ENCODE measurements at regions of chr12 and their contacts with region 1.

Region 1: DNA sequence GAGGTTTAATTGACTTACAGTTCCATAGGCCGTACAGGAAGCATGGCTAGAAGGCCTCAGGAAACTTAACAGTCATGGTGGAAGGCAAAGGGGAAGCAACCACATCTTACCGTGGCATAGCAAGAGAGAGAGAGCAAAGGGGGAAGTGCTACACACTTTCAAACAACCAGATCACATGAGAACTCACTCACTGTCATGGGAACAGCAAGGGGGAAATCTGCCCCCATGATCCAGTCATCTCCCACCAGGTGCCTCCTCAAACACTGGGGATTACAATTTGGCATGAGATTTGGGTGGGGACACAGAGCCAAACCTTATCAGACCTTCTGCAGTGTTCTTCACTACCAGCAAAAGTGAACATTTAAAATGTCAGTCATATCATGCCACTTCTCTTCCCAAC is 58.9 kb downstream of the USP15 start:
- DNase-seq: no peak
- ATAC-seq: no peak

Region 2: DNA sequence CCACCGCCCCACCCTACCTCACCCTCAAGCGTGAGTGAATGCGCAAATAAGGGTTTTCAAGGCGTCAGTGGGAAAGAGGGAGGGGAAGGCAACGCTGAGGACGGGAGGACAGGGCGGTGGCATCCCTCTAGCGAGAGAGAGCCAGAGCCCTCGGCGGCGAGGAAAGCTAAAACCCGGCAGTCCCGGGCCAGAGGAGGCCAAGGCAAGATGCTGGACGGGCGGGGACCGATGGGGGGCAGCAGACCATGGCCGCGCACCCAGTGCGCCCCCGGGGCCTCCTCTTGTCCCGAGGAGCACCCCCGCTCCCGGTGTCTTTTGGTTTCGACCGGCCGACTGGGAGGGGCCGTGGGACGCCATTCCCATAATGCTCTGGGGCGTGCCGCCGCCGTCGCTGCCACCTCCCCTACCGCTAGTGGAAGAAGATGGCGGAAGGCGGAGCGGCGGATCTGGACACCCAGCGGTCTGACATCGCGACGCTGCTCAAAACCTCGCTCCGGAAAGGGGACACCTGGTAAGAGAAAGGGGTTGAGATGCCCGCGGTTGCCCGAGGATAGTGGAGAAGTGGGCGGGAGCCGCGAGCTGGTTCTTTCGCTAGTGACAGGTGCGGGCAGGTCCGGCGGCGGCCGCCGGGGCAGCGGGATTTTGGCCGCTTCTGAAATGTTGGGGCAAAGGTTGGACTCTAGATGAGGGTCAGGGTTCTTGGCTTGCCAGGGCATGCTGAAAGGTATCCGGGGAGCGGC is 58.9 kb before region 1 on chr12 and contains the start of gene USP15:
- intact Hi-C with region 1: loop called (anchors 5 kb)
- DNase-seq: peak; percentile 98
- ATAC-seq: peak; percentile 98
- total RNA-seq, gene USP15: 50.7 TPM

Region 3: GRCh38 chr12:62282057-62282774 is 36.8 kb before region 1 on chr12:
- intact Hi-C with region 1: loop called (anchors 5 kb)
- DNase-seq: peak; percentile 0
- ATAC-seq: no peak

Region 4: DNA sequence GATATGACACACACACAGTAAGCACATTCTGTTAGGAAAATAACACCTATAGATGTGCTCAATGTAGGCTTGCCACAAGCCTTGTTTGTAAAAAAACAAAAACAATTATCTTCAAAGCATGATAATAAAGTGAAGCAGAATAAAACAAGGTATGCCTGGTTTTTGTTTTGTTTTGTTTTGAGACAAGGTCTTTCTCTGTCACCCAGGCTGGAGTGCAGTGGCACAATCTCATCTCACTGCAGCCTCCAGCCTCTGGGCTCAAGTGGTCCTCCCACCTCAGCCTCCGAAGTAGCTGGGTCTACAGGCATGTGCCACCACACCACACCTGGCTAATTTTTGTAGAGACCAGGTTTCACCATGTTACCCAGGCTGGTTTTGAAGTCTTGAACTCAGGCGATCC is 95.1 kb after region 1 on chr12:
- intact Hi-C with region 1: no loop called
- DNase-seq: peak; percentile 37
- ATAC-seq: no peak

Measured in Right ventricle myocardium inferior (tissue), 1 donor.